T-cell (primary cell): ENCODE measurements at regions of chr11 and their contacts with region 1.

Region 1: GRCh38 chr11:38693306-38693705 is 2095.3 kb upstream of the RAG2 start:
- DNase-seq: no peak
- ATAC-seq: no peak
- H3K4me3 ChIP-seq: no peak overlapping the region
- H3K4me3 Mint-ChIP-seq: no peak overlapping the region
- H3K27ac ChIP-seq: no peak overlapping the region
- H3K27ac Mint-ChIP-seq: no peak overlapping the region
- H3K4me1 ChIP-seq: no peaks in the 10 kb centered on the region
- H3K4me1 Mint-ChIP-seq: no peaks in the 10 kb centered on the region
- H3K27me3 ChIP-seq: no peaks in the 10 kb centered on the region
- H3K27me3 Mint-ChIP-seq: no peaks in the 10 kb centered on the region

Region 2: GRCh38 chr11:38680746-38681145 is 12.6 kb before region 1 on chr11:
- CTCF ChIA-PET with region 1: no interaction called
- POLR2A ChIA-PET with region 1: no interaction called
- DNase-seq: no peak
- ATAC-seq: no peak
- H3K4me3 ChIP-seq: no peak overlapping the region
- H3K4me3 Mint-ChIP-seq: no peak overlapping the region
- H3K27ac ChIP-seq: no peak overlapping the region
- H3K27ac Mint-ChIP-seq: no peak overlapping the region
- H3K4me1 ChIP-seq: no peaks in the 10 kb centered on the region
- H3K4me1 Mint-ChIP-seq: no peaks in the 10 kb centered on the region
- H3K27me3 ChIP-seq: no peaks in the 10 kb centered on the region
- H3K27me3 Mint-ChIP-seq: no peaks in the 10 kb centered on the region

Region 3: GRCh38 chr11:38988908-38989307 is 295.6 kb after region 1 on chr11:
- CTCF ChIA-PET with region 1: interaction called in 1 of 2 experiments, 10 read pairs
- POLR2A ChIA-PET with region 1: no interaction called
- DNase-seq: no peak
- ATAC-seq: no peak
- H3K4me3 ChIP-seq: no peak overlapping the region
- H3K4me3 Mint-ChIP-seq: no peak overlapping the region
- H3K27ac ChIP-seq: no peak overlapping the region
- H3K27ac Mint-ChIP-seq: no peak overlapping the region
- H3K4me1 ChIP-seq: no peaks in the 10 kb centered on the region
- H3K4me1 Mint-ChIP-seq: no peaks in the 10 kb centered on the region
- H3K27me3 ChIP-seq: no peaks in the 10 kb centered on the region
- H3K27me3 Mint-ChIP-seq: no peaks in the 10 kb centered on the region